Adrenal gland (tissue), 19 donors: ENCODE measurements at regions of chr1 and their contacts with region 1.

Region 1: GRCh38 chr1:45001011-45001481 is 10.1 kb downstream of the HECTD3 start:
- DNase-seq: peak; percentile 28 to 84 (median 73)
- H3K4me3 ChIP-seq: no peak overlapping the region
- H3K27ac ChIP-seq: peak overlapping the region in 1 of 5 donors; percentile 42
- H3K4me1 ChIP-seq: peaks cover 0 to 6% of the 10 kb centered on the region in 2 donors
- H3K27me3 ChIP-seq: no peaks in the 10 kb centered on the region
- CTCF ChIP-seq: peak in 5 of 6 experiments; percentile 26 to 42 (median 32)
- POLR2A ChIP-seq: no peak

Region 2: GRCh38 chr1:44842862-44843655 is 158.0 kb before region 1 on chr1 and contains the start of gene PTCH2:
- intact Hi-C with region 1: loop called (anchors 5 kb)
- DNase-seq: peak; percentile 67 to 81 (median 76)
- H3K4me3 ChIP-seq: peak within 1 kb of the TSS in 2 of 4 donors; percentile 50 to 71
- H3K27ac ChIP-seq: peak within 1 kb of the TSS in 2 of 5 donors; percentile 28 to 45
- H3K4me1 ChIP-seq: peaks cover 5 to 19% of the 10 kb centered on the region in 2 donors
- H3K27me3 ChIP-seq: no peaks in the 10 kb centered on the region
- CTCF ChIP-seq: no peak
- POLR2A ChIP-seq: peak in 1 of 2 donors; percentile 54
- total RNA-seq, gene PTCH2: 0.42 to 3.0 (median 1.5) TPM

Region 3: GRCh38 chr1:45490626-45491486 is 489.8 kb after region 1 on chr1 and contains the start of gene TESK2:
- intact Hi-C with region 1: no loop called
- DNase-seq: peak; percentile 98 to 100 (median 99)
- H3K4me3 ChIP-seq: peak within 1 kb of the TSS; percentile 49 to 90 (median 72)
- H3K27ac ChIP-seq: peak within 1 kb of the TSS in 4 of 5 donors; percentile 45 to 87 (median 74)
- H3K4me1 ChIP-seq: peaks cover 6 to 12% of the 10 kb centered on the region in 2 donors
- H3K27me3 ChIP-seq: no peaks in the 10 kb centered on the region
- CTCF ChIP-seq: peak in 4 of 6 experiments; percentile 24 to 47 (median 38)
- POLR2A ChIP-seq: peak; percentile 52 to 93
- total RNA-seq, gene TESK2: 1.1 to 21.4 (median 4.2) TPM